ENCODE measurements at regions of chr6 and their contacts with region 1.

Region 1: DNA sequence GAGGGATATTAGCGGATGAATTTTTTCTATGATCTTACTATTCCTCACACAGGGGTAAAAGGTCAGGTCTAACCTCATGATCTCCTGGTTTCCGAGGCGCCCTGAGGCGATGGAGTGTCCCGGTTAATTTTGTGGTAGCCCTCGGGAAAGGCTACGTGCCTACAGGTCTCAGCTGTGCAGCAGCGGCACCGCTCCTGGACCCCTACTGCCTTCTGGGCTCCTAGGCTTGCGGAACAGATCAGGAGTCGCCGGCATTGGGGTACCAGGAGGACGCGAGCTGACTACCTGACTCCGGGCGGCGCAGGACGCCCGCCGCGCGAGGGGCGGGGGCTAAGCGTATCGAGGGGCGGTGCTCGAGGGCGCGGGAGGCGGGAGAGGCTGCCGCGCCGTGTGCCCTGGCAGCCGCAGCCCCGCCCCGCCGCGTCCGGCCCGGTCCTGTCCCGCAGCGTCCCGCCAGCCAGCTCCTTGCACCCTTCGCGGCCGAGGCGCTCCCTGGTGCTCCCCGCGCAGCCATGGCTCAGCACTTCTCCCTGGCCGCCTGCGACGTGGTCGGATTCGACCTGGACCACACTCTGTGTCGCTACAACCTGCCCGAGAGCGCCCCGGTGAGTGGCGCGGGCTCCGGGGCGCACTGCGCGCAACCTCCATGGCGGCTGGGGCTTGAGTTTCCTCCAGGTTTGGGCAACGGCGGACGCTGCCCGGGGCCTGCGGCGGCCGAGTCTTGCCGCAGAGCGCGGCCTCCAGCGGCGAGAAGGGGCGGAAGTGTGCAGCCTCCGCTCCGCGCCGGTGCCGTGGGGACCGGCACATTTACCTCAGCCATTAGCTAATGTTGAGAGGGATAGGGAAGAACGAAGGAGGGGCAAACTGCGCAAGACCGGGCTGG is at the start of gene NT5DC1:
- DNase-seq: peak; percentile 87
- H3K4me3 Mint-ChIP-seq: peak within 1 kb of the TSS; percentile 90
- H3K27ac Mint-ChIP-seq: peak within 1 kb of the TSS; percentile 81
- H3K4me1 Mint-ChIP-seq: peaks cover 43% of the 10 kb centered on the region
- H3K27me3 Mint-ChIP-seq: no peaks in the 10 kb centered on the region
- total RNA-seq, gene NT5DC1: 59.7 to 62.6 TPM

Region 2: GRCh38 chr6:115896538-115897129 is 204.0 kb before region 1 on chr6:
- CTCF ChIA-PET with region 1: no interaction called
- intact Hi-C with region 1: loop called (anchors 10 kb)
- DNase-seq: no peak
- H3K4me3 Mint-ChIP-seq: no peak overlapping the region
- H3K27ac Mint-ChIP-seq: no peak overlapping the region
- H3K4me1 Mint-ChIP-seq: no peaks in the 10 kb centered on the region
- H3K27me3 Mint-ChIP-seq: peaks cover 9% of the 10 kb centered on the region

Region 3: DNA sequence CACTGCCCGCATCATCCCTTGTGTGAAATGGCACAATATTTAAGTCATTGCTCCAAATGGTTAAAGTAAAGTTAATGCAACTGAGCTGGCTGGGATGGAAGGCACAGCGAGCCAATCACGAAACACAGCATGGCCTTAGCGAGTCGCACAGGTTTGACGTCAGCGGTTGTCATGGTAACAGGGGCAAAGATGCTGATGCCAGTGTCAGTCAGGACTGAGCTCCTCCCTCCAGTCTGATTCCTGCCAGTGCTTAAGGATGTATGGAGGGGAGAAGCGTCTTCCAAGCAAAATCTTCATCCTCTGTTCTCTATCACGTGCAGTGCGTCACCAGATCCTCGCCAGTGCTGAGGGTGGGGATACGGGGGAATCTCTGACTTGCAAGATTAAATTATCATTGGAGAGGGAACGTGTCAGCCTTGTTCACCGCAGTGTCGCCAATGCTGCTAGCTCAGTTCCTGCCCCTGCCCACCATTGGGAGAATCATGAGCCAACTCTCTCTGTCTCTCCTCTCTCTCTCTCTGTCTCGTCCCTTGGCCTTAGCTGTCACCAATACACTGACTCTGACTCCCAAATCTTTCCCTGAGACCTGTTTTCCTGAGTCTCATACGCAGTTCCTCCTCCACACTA is 128.7 kb after region 1 on chr6:
- CTCF ChIA-PET with region 1: no interaction called
- intact Hi-C with region 1: no loop called
- DNase-seq: peak; percentile 14
- H3K4me3 Mint-ChIP-seq: no peak overlapping the region
- H3K27ac Mint-ChIP-seq: no peak overlapping the region
- H3K4me1 Mint-ChIP-seq: no peaks in the 10 kb centered on the region
- H3K27me3 Mint-ChIP-seq: no peaks in the 10 kb centered on the region

Region 4: DNA sequence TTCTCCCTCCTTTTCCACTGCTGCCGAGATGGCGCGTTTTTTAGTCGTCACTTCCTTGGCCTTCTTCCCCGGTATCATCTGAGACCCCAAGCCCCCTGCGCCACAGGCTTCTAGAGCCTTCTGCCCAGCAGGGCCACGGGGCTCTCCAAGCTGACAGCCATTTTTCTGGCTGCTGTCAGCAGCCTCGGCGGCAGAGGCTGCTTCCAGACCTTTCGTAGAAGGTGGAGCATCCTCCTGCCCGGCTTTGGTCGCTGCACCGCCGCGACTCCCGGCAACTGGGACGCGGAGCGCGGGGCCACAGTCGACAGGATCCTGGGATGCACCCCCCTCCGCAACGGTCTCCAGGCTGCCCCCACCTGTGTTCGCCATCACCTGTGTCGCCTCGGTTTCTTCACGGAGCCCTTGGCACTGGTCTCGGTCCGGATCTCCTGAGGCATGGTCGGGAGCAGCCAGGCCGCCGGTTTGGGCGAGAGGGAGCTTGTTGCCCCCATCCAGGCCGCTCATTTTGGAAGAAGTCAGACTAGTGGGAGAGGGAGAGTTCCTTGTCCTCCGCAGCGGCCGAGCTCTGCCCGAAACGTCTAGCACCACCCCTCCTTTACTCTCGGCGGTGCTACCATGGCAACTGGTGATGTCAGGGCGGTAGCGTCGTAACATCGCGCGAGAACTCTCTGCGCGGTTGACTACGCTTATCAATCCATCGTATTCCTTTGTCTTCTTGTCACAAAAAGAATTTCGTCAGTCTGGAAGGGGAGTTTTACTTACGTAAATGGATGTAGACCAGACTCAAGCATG is 153.0 kb after region 1 on chr6 and contains the start of gene TSPYL4:
- CTCF ChIA-PET with region 1: no interaction called
- intact Hi-C with region 1: loop called (anchors 1 kb)
- DNase-seq: peak; percentile 95
- H3K4me3 Mint-ChIP-seq: no peak within 1 kb of the TSS
- H3K27ac Mint-ChIP-seq: no peak within 1 kb of the TSS
- H3K4me1 Mint-ChIP-seq: peaks cover 35% of the 10 kb centered on the region
- H3K27me3 Mint-ChIP-seq: no peaks in the 10 kb centered on the region
- total RNA-seq, gene TSPYL4: 7.8 to 8.0 TPM

Region 5: GRCh38 chr6:116371120-116371917 is 270.7 kb after region 1 on chr6:
- CTCF ChIA-PET with region 1: no interaction called
- intact Hi-C with region 1: loop called (anchors 5 kb)
- DNase-seq: peak; percentile 43
- H3K4me3 Mint-ChIP-seq: peak overlapping the region; percentile 71
- H3K27ac Mint-ChIP-seq: no peak overlapping the region
- H3K4me1 Mint-ChIP-seq: peaks cover 8% of the 10 kb centered on the region
- H3K27me3 Mint-ChIP-seq: peaks cover 24% of the 10 kb centered on the region

Region 6: DNA sequence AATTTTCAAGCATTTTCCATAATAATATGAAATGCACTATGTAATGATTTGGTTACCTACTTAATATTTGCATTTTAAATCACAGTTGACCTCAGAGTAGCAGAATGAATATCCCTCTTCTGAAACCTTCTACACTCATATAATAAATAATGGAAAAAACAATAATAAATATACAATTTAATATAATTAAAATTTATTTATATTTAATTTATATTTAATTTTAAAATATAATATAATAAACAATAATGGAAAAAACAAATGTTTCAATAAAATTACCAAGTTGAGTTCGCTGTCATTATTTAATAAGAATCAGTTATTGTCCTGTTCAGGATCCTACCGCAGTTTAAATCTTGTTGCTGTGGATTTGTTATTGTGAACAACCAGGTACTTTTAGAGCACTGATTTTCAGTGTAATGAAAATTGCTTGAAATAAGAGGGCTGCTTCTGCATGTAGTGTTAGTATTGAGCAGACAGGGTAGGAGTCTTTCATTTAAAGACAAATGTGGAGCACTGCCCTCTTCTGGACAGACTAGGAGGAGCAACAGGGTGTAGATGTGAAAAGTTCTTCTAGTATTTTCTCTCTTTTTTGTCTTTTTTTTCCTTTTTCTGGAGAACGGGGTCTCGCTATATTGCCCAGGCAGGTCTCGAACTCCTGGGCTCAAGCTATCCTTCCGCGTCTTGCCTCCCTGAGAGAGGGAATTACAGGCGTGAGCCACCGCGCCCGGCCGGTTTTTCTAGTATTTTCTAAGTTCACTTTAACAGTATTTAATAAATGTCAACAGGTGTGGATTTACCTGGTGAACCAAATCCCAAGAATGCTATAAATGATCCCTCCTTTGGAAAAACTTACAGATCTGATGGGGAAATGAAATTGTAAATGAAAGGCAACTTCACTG is 431.3 kb after region 1 on chr6:
- CTCF ChIA-PET with region 1: no interaction called
- intact Hi-C with region 1: loop called (anchors 10 kb)
- DNase-seq: peak; percentile 79
- H3K4me3 Mint-ChIP-seq: no peak overlapping the region
- H3K27ac Mint-ChIP-seq: no peak overlapping the region
- H3K4me1 Mint-ChIP-seq: no peaks in the 10 kb centered on the region
- H3K27me3 Mint-ChIP-seq: peaks cover 11% of the 10 kb centered on the region

Region 7: DNA sequence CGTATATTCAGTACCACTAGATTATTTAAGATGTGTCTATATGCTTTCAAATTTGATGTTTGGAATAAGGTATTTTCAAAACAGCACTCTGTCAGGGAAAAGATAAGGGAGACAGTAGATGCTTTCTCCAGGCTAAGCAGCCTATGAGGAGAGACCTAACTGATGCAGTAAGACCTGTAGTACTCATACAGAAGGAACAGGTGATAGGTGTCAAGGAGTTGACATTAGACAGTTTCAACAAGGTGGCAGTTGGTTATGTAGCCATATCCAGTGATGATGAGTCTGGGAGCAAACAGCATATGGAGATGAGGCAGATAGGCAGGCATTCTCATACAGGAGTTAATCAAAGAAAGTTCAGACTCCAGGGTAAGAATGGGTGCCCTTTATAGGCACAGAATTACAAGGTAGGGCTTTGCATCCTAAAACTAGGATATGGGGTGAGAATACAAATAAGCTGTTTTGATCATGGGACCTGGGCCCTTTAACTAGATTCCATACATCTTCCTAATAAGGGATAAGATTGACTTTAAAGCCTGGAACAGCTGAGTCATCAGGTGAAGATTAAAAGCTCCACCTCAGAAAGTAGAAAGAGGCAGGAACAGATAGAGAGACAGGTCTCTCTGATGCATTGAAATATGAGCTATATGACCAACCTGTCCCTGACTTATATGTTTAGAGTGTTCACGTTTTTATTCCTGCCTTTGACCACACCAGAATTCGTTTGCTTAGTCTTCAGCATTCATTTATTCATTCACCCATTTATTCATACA is 523.6 kb after region 1 on chr6:
- CTCF ChIA-PET with region 1: no interaction called
- intact Hi-C with region 1: no loop called
- DNase-seq: no peak
- H3K4me3 Mint-ChIP-seq: no peak overlapping the region
- H3K27ac Mint-ChIP-seq: no peak overlapping the region
- H3K4me1 Mint-ChIP-seq: no peaks in the 10 kb centered on the region
- H3K27me3 Mint-ChIP-seq: no peaks in the 10 kb centered on the region

Region 8: DNA sequence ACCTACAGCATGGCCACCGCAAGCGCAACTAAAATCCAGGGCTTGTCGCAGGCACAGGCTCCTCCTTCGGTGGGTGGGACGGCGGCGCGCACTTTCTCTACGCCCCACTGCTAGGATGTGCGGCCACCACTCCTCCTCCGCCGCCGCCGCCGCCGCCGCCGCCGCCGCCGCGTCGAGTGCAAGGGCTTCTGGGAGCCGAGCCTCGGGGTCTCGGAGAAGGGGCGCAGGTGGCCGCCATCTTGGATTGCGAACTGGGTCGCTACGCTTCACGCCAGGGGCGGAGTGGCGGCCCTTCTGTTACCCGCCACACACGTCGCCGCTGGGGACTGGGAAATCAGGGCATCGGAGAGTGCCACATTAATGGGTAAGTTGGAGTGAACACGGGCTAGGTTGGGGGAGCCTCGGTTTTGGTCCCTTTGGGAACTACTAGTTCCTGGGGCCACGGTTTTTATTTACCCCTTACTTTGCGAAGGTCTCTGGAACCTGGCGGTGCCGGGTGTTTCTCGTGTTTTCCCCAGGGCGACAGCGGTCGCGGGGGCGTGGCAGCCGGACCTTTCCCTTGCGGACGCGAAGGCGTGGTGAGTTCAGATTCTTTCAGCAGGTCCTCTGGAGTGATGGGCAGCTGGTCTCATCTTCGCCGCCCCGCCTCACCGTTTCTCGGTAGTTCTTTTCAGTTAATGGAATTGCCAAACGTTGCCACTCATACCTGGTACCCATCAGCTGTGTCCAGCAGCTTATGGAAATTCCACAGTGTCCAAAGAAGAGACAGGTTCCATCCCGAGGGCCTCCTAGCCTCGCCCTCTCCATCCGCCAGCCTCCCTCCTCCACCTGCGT is 580.5 kb after region 1 on chr6 and contains the start of gene KPNA5:
- CTCF ChIA-PET with region 1: no interaction called
- intact Hi-C with region 1: loop called (anchors 5 kb)
- DNase-seq: peak; percentile 94
- H3K4me3 Mint-ChIP-seq: peak within 1 kb of the TSS; percentile 96
- H3K27ac Mint-ChIP-seq: peak within 1 kb of the TSS; percentile 97
- H3K4me1 Mint-ChIP-seq: peaks cover 43% of the 10 kb centered on the region
- H3K27me3 Mint-ChIP-seq: no peaks in the 10 kb centered on the region
- total RNA-seq, gene KPNA5: 8.4 to 8.9 TPM